ENCODE measurements at regions of chr21 and their contacts with region 1.

Region 1: GRCh38 chr21:29073222-29074006 is at the start of gene CCT8:
- DNase-seq: peak; percentile 100
- H3K4me3 ChIP-seq: peak within 1 kb of the TSS; percentile 100
- H3K27ac ChIP-seq: peak within 1 kb of the TSS; percentile 74
- H3K4me1 ChIP-seq: peaks cover 46% of the 10 kb centered on the region
- CTCF ChIP-seq: no peak
- total RNA-seq, gene CCT8: 229 and 240 TPM in 2 replicates

Region 2: GRCh38 chr21:28992526-28993292 is 80.7 kb before region 1 on chr21 and contains the start of gene LTN1:
- CTCF ChIA-PET with region 1: no interaction called
- POLR2A ChIA-PET with region 1: interaction called, 7 read pairs
- intact Hi-C with region 1: loop called (anchors 1 kb)
- DNase-seq: peak; percentile 99
- H3K4me3 ChIP-seq: peak within 1 kb of the TSS; percentile 90
- H3K27ac ChIP-seq: peak within 1 kb of the TSS; percentile 83
- H3K4me1 ChIP-seq: peaks cover 27% of the 10 kb centered on the region
- CTCF ChIP-seq: no peak
- total RNA-seq, gene LTN1: 17.2 and 18.4 TPM in 2 replicates

Region 3: DNA sequence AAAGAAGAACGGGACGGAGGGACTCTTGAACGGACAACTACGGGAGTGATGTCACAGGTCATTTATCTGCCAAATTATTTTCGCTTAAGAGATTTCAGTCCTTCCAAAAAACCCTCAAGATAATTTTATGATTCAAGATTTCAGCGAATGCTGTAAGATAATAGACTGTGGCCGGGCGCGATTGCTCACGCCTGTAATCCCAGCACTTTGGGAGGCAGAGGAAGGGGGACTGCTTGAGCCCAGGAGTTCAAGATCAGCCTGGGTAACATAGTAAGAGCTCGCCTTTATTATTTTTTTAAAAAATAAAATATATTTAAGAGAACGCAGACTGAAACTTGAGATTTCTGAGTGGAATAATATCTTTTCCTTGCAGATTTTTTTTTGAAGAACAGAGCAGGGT is 54.9 kb before region 1 on chr21:
- CTCF ChIA-PET with region 1: no interaction called
- POLR2A ChIA-PET with region 1: interaction called, 35 read pairs
- intact Hi-C with region 1: loop called (anchors 1 kb)
- DNase-seq: no peak
- H3K4me3 ChIP-seq: peak overlapping the region; percentile 86
- H3K27ac ChIP-seq: peak overlapping the region; percentile 56
- H3K4me1 ChIP-seq: peaks cover 18% of the 10 kb centered on the region
- CTCF ChIP-seq: no peak

Region 4: DNA sequence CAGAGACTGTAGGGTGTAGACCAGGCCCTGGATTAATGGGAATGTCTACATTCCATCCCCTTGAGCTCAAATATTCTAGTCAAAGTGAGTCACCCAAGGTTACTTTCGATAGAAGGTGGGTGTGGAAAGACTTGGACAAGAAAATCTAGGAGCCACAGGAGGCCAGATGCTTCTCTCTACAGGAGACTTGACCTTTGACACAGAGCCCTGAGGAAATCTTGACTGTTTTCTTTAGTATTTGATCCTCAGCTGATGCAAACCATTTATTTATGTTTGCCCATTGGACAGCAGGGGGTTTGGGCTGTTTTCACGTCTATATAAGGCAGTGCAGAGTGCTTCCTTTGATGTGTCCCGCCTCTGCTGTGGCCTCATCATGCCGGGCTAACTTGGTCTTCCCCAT is 41.4 kb after region 1 on chr21:
- CTCF ChIA-PET with region 1: no interaction called
- POLR2A ChIA-PET with region 1: interaction called, 19 read pairs
- intact Hi-C with region 1: no loop called
- DNase-seq: no peak
- H3K4me3 ChIP-seq: no peak overlapping the region
- H3K27ac ChIP-seq: no peak overlapping the region
- H3K4me1 ChIP-seq: peaks cover 22% of the 10 kb centered on the region
- CTCF ChIP-seq: no peak

Region 5: GRCh38 chr21:29298348-29299045 is 225.1 kb after region 1 on chr21 and contains the start of gene BACH1:
- CTCF ChIA-PET with region 1: no interaction called
- POLR2A ChIA-PET with region 1: interaction called, 18 read pairs
- intact Hi-C with region 1: loop called (anchors 2 kb)
- DNase-seq: peak; percentile 90
- H3K4me3 ChIP-seq: peak within 1 kb of the TSS; percentile 71
- H3K27ac ChIP-seq: peak within 1 kb of the TSS; percentile 11
- H3K4me1 ChIP-seq: peaks cover 48% of the 10 kb centered on the region
- CTCF ChIP-seq: peak; percentile 32; the same call in 1 of the 2 replicates
- total RNA-seq, gene BACH1: 18.6 and 19.1 TPM in 2 replicates